Aorta (tissue), 5 donors: ENCODE measurements at regions of chr6 and their contacts with region 1.

Region 1: DNA sequence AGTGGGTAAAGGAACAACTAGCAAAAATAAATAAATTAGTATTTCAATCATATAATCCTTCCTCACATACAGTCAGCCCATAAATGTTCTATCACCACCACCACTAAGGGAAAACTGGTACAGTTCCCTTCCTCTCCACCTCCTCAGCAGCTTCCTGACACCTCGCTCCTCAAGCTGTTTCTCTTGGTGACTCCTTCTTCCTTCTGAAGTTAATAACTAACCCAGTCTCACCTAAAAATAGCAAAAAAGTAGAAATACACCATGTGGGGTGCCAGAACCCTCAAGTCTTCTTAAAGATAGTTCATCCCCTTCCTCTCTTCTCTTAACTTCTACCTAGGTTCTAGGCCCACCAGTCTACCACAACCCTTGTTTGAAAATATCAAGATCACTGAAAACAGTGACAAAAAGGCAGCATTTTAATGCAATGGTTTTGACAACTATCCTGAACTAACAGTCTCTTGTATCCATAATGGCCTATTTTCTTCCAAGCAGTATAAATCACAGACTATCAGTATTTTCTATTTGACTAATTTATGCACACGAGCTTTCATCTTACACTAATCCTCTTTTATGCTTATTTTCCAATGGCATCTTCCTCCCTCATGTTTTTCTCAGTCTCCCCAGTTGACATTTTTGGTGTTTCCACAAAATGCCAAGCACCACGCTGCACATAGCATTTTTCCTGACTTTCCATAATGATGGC is 85.5 kb downstream of the KHDC1L start:
- DNase-seq: no peak
- ATAC-seq: no peak
- H3K4me3 ChIP-seq: no peak overlapping the region
- H3K27ac ChIP-seq: no peak overlapping the region
- H3K4me1 ChIP-seq: no peaks in the 10 kb centered on the region
- H3K27me3 ChIP-seq: no peaks in the 10 kb centered on the region

Region 2: GRCh38 chr6:72418495-72418894 is 721.3 kb before region 1 on chr6:
- intact Hi-C with region 1: loop called in 1 of 2 experiments (anchors 5 kb)
- DNase-seq: no peak
- ATAC-seq: no peak
- H3K4me3 ChIP-seq: no peak overlapping the region
- H3K27ac ChIP-seq: no peak overlapping the region
- H3K4me1 ChIP-seq: no peaks in the 10 kb centered on the region
- H3K27me3 ChIP-seq: no peaks in the 10 kb centered on the region

Region 3: DNA sequence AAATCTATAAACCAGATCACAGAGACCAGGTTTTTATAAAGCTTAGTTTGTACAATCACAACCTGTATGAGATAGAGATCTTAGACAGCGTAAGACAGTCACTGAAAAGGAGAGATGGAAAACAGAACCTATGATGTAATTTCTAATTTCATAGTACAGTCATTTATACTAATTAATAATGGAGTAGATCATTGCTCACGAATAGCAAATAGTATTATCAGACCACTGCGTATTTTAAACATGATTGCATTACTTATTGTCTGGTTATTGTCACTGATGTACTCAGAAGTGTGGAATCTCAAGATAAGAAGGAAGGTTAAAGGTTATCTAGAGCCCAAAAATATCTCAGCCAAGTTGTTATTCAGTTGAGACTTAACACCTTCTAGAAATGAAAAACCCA is 30.2 kb before region 1 on chr6:
- intact Hi-C with region 1: no loop called
- DNase-seq: no peak
- ATAC-seq: no peak
- H3K4me3 ChIP-seq: no peak overlapping the region
- H3K27ac ChIP-seq: no peak overlapping the region
- H3K4me1 ChIP-seq: peaks cover 0 to 3% of the 10 kb centered on the region in 2 donors
- H3K27me3 ChIP-seq: no peaks in the 10 kb centered on the region

Region 4: GRCh38 chr6:73258721-73259120 is 118.9 kb after region 1 on chr6:
- intact Hi-C with region 1: no loop called
- DNase-seq: no peak
- ATAC-seq: no peak
- H3K4me3 ChIP-seq: no peak overlapping the region
- H3K27ac ChIP-seq: no peak overlapping the region
- H3K4me1 ChIP-seq: no peaks in the 10 kb centered on the region
- H3K27me3 ChIP-seq: no peaks in the 10 kb centered on the region